Activated CD4-positive, alpha-beta memory T cell treated with anti-CD3 and anti-CD28 coated beads, Interleukin-2, amount 10 ng/mL, durations not matched to agents 7 days and 5 days (primary cell): ENCODE measurements at regions of chr3 and their contacts with region 1.

Region 1: GRCh38 chr3:44510000-44510368 is 32.5 kb upstream of the ZNF445 start:
- DNase-seq: no peak
- H3K4me3 Mint-ChIP-seq: peak overlapping the region; percentile 85
- H3K27ac Mint-ChIP-seq: peak overlapping the region; percentile 69
- H3K4me1 Mint-ChIP-seq: peaks cover 26% of the 10 kb centered on the region
- H3K27me3 Mint-ChIP-seq: no peaks in the 10 kb centered on the region

Region 2: DNA sequence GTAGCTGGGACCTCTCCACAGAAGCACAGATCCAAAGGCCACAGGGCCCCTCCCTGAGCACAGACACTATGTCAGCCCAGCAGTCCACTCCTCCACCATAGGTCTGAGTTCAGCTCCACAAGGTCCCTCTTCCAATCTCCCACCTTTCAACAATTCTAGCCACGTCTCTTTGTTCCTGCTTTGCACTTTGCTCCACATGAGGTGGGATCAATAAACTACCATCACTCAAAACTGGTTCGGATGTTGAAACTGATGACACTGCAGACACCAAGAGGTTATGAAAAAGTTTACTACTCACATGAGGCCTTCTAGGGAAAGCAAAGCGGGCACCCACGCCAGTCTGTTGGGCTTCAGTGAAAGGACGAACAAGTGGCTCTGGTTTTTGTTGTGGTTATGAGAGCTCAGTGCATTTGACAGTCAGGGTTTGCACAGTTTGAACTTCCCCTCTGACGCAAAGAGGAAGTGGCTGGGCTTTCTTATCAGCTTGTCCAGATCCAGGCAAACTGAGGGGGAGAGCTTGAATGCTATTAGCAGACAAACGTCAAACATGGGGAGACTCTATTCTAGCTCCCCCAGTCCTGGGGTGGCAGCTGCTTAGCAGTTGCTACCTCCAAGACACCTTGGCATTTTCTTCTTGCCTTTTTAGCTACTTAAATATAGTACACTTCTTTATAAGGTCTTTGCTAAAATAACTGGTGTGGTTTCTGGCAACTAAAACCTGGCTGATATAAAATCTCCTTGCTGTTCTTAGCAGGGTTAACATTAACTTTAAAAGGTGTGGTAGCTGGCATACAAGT is 70.3 kb before region 1 on chr3:
- CTCF ChIA-PET with region 1: no interaction called
- POLR2A ChIA-PET with region 1: interaction called, 11 read pairs
- DNase-seq: peak; percentile 80
- H3K4me3 Mint-ChIP-seq: no peak overlapping the region
- H3K27ac Mint-ChIP-seq: peak overlapping the region; percentile 84
- H3K4me1 Mint-ChIP-seq: peaks cover 36% of the 10 kb centered on the region
- H3K27me3 Mint-ChIP-seq: no peaks in the 10 kb centered on the region

Region 3: GRCh38 chr3:44477312-44478030 is 32.5 kb before region 1 on chr3 and contains the start of gene ZNF445:
- CTCF ChIA-PET with region 1: interaction called, 7 read pairs
- POLR2A ChIA-PET with region 1: interaction called, 16 read pairs
- DNase-seq: peak; percentile 80
- H3K4me3 Mint-ChIP-seq: peak within 1 kb of the TSS; percentile 90
- H3K27ac Mint-ChIP-seq: peak within 1 kb of the TSS; percentile 78
- H3K4me1 Mint-ChIP-seq: peaks cover 22% of the 10 kb centered on the region
- H3K27me3 Mint-ChIP-seq: no peaks in the 10 kb centered on the region
- total RNA-seq, gene ZNF445: 17.8 to 19.6 TPM

Region 4: GRCh38 chr3:44624749-44625480 is 114.9 kb after region 1 on chr3 and contains the start of gene ZNF197:
- CTCF ChIA-PET with region 1: no interaction called
- POLR2A ChIA-PET with region 1: interaction called, 15 read pairs
- DNase-seq: peak; percentile 71
- H3K4me3 Mint-ChIP-seq: peak within 1 kb of the TSS; percentile 86
- H3K27ac Mint-ChIP-seq: peak within 1 kb of the TSS; percentile 81
- H3K4me1 Mint-ChIP-seq: peaks cover 19% of the 10 kb centered on the region
- H3K27me3 Mint-ChIP-seq: no peaks in the 10 kb centered on the region
- total RNA-seq, gene ZNF197: 13.4 to 14.0 TPM

Region 5: DNA sequence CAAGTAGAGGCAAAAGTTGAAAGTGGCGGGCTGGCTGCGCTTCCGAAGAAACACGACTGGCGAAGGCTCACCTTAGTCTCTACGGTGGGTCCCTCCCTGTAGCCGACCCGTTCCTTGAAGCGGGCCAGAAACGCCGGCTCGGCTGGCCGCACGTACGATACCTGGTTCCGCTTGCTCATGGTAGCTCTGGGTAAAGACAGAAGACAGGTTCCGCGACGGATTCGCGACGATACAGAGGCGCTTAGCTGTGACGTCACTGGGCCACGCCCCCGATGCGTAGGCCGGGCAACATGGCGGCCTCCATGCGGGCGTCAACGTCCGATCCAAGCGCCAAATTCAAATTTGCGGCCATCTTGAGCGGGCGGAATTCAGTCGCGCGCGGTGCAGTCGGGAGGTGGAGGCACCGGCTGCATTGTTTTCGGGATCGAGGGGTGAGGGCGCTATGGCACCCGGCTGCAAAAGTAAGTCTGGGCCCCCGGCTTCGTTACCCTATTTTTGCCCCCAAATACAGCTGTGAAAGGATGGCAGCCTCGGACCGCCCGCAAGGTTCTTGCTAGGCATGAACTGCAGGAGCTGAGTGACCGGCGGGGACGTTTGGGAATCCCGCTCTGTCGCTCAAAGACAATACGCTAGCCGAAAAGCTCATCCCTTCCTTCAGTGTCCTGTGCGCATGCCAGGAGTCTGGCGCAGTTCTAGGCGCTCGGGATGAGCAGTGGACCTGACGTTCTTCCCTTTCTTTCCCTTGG is 251.6 kb after region 1 on chr3 and contains the starts of genes KIAA1143 and KIF15:
- CTCF ChIA-PET with region 1: interaction called, 3 read pairs
- POLR2A ChIA-PET with region 1: interaction called, 24 read pairs
- DNase-seq: peak; percentile 98
- H3K4me3 Mint-ChIP-seq: peak within 1 kb of the TSS; percentile 90
- H3K27ac Mint-ChIP-seq: peak within 1 kb of the TSS; percentile 86
- H3K4me1 Mint-ChIP-seq: peaks cover 39% of the 10 kb centered on the region
- H3K27me3 Mint-ChIP-seq: no peaks in the 10 kb centered on the region
- total RNA-seq, gene KIAA1143: 31.3 to 35.9 TPM
- total RNA-seq, gene KIF15: 52.5 to 53.2 TPM